Activated CD8-positive, alpha-beta T cell treated with anti-CD3 and anti-CD28 coated beads for 36 hours (primary cell): ENCODE measurements at regions of chr14 and their contacts with region 1.

Region 1: DNA sequence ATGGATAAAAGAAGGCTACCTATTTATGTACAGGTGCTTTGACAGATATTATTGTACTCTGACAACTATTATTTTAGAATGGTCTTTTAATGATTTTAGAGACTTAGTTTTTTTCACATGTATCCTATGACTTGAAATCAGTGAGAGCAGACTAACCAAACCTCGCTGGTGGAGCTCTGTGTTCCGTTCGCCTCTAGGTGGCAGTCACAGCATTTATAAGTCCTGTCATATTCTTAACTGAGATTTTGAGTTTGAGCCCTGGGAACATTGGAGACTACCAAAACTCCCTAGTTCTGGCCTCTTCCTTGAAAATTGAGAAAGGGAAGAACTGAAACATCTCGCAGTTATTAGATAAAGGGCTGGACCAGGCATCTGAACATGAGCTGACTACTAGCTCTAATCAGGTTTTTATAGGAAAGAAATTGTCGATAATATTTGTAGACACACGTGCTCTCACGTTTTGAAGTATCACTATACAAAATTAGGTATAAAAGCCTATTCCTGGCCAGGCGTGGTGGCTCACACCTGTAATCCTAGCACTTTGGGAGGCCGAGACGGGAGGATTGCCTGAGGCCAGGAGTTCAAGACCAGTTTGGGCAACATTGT is 48.3 kb downstream of the TTLL5 start:
- DNase-seq: peak; percentile 80
- ATAC-seq: peak; percentile 61
- H3K4me3 Mint-ChIP-seq: no peak overlapping the region
- H3K27ac Mint-ChIP-seq: no peak overlapping the region
- H3K4me1 Mint-ChIP-seq: no peaks in the 10 kb centered on the region
- H3K27me3 Mint-ChIP-seq: no peaks in the 10 kb centered on the region
- CTCF ChIP-seq: peak; percentile 85

Region 2: DNA sequence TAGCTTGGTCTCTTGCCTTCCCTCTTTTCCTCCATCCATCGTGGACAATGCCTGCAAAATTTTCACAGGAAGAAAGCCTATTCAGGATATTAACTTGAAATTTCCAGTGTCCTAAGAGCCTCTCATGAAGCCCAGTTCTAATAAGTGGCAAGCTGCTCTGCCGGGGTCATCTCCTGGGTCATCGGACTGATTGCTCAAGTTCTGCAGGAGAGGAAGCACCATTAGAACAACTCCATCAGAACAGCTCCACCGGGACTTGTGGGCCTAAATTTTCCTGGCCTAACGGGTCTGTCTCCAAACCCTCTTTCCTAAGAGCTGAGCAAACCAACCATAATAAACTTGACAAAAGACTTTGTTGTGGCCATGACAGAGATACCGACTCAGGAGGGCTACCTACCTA is 62.5 kb before region 1 on chr14:
- CTCF ChIA-PET with region 1: no interaction called
- POLR2A ChIA-PET with region 1: no interaction called
- intact Hi-C with region 1: no loop called
- DNase-seq: no peak
- ATAC-seq: no peak
- H3K4me3 Mint-ChIP-seq: no peak overlapping the region
- H3K27ac Mint-ChIP-seq: no peak overlapping the region
- H3K4me1 Mint-ChIP-seq: no peaks in the 10 kb centered on the region
- H3K27me3 Mint-ChIP-seq: no peaks in the 10 kb centered on the region
- CTCF ChIP-seq: no peak

Region 3: DNA sequence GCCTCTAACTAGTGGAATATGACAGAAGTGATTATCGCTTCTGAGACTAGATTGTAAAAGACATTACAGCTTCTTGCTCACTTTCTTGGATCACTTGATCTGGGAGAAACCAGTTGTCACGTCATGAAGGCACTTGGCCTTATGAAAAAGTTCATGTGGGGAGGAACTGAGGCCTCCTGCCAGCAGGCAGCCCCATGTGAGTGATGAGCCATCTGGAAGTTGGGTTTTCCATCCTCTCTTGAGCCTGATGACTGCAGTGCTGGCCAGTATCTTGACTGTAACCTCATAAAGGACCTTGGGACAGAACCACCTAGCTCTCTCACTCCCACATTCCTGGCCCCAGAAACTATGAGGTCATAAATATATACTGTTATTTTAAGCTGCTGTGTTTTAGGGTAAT is 20.3 kb before region 1 on chr14:
- CTCF ChIA-PET with region 1: interaction called, 16 read pairs
- POLR2A ChIA-PET with region 1: no interaction called
- intact Hi-C with region 1: no loop called
- DNase-seq: no peak
- ATAC-seq: no peak
- H3K4me3 Mint-ChIP-seq: no peak overlapping the region
- H3K27ac Mint-ChIP-seq: no peak overlapping the region
- H3K4me1 Mint-ChIP-seq: peaks cover 6% of the 10 kb centered on the region
- H3K27me3 Mint-ChIP-seq: no peaks in the 10 kb centered on the region
- CTCF ChIP-seq: no peak

Region 4: GRCh38 chr14:75720842-75721498 is 11.7 kb after region 1 on chr14:
- CTCF ChIA-PET with region 1: interaction called, 13 read pairs
- POLR2A ChIA-PET with region 1: no interaction called
- intact Hi-C with region 1: no loop called
- DNase-seq: no peak
- ATAC-seq: no peak
- H3K4me3 Mint-ChIP-seq: no peak overlapping the region
- H3K27ac Mint-ChIP-seq: no peak overlapping the region
- H3K4me1 Mint-ChIP-seq: no peaks in the 10 kb centered on the region
- H3K27me3 Mint-ChIP-seq: no peaks in the 10 kb centered on the region
- CTCF ChIP-seq: no peak

Region 5: DNA sequence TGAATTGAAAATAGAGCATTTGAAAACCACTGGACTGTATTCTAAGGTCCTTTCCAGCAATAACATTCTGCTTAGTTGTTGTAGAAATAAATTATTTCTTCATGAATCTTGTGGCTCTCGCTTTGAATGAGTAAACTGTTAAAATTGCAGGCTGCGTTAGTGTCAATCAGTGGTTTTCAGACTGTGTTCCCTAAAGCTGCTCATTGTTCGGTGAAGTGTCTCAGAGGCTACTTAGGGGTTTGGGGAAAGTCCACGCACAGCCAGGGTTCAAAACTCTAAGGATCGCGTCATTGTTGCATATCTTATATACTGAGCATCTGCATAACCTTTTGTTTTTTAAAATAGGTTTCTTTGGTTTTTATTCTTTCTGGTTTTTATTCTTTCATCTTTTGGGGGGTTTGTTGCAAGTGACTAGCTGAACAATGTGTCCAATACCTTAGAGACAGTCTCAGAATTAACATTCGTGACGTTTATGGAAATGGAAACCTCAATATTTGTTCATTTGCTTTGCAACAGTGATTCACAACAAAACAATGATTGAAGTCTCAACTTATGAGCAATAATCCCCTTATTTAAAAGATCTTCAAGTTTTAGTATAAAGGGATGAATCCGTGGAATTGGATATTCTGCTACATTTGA is 59.9 kb after region 1 on chr14:
- CTCF ChIA-PET with region 1: interaction called, 15 read pairs
- POLR2A ChIA-PET with region 1: no interaction called
- intact Hi-C with region 1: no loop called
- DNase-seq: no peak
- ATAC-seq: no peak
- H3K4me3 Mint-ChIP-seq: no peak overlapping the region
- H3K27ac Mint-ChIP-seq: no peak overlapping the region
- H3K4me1 Mint-ChIP-seq: no peaks in the 10 kb centered on the region
- H3K27me3 Mint-ChIP-seq: no peaks in the 10 kb centered on the region
- CTCF ChIP-seq: no peak

Region 6: GRCh38 chr14:75842551-75842950 is 133.2 kb after region 1 on chr14:
- CTCF ChIA-PET with region 1: no interaction called
- POLR2A ChIA-PET with region 1: no interaction called
- intact Hi-C with region 1: no loop called
- DNase-seq: no peak
- ATAC-seq: no peak
- H3K4me3 Mint-ChIP-seq: no peak overlapping the region
- H3K27ac Mint-ChIP-seq: no peak overlapping the region
- H3K4me1 Mint-ChIP-seq: peaks cover 2% of the 10 kb centered on the region
- H3K27me3 Mint-ChIP-seq: no peaks in the 10 kb centered on the region
- CTCF ChIP-seq: no peak

Region 7: DNA sequence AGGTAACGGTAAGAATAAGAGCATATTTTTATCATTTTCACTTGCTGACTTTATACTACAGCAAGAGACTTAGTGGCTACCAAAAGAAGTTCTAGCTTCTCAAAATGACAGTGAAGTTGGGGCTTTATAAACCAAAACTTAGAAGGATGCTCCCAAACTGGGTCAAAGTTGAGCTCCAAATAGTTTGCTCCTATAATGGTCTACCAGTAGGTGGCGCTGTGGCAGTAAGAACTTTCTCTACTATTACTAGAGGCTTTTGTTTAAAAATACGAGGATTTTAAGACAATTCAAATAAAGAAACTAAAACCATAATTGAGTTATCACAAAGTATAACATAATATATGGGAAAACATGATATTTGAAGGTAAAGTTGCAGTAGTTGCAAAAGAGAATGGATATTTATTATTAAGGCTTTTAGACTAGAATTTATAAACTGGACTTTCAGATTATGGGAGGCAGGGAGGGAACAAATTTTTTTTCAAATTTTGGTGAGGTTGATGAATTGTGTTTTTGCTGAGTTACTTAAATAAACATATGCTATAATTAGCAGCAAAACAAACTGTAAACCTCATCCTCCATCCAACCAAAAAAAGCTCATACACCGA is 197.5 kb after region 1 on chr14:
- CTCF ChIA-PET with region 1: interaction called, 21 read pairs
- POLR2A ChIA-PET with region 1: interaction called, 3 read pairs
- intact Hi-C with region 1: no loop called
- DNase-seq: peak; percentile 79
- ATAC-seq: peak; percentile 42
- H3K4me3 Mint-ChIP-seq: no peak overlapping the region
- H3K27ac Mint-ChIP-seq: no peak overlapping the region
- H3K4me1 Mint-ChIP-seq: no peaks in the 10 kb centered on the region
- H3K27me3 Mint-ChIP-seq: no peaks in the 10 kb centered on the region
- CTCF ChIP-seq: peak; percentile 89

Region 8: GRCh38 chr14:75982266-75983018 is 273.1 kb after region 1 on chr14:
- CTCF ChIA-PET with region 1: interaction called, 82 read pairs
- POLR2A ChIA-PET with region 1: interaction called, 3 read pairs
- intact Hi-C with region 1: loop called (anchors 2 kb)
- DNase-seq: peak; percentile 76
- ATAC-seq: peak; percentile 64
- H3K4me3 Mint-ChIP-seq: peak overlapping the region; percentile 80
- H3K27ac Mint-ChIP-seq: peak overlapping the region; percentile 81
- H3K4me1 Mint-ChIP-seq: peaks cover 44% of the 10 kb centered on the region
- H3K27me3 Mint-ChIP-seq: no peaks in the 10 kb centered on the region
- CTCF ChIP-seq: peak; percentile 68